Naive thymus-derived CD4-positive, alpha-beta T cell (primary cell): ENCODE measurements at regions of chr12 and their contacts with region 1.

Region 1: GRCh38 chr12:79373896-79374499 is 316.8 kb downstream of the PAWR start:
- DNase-seq: no peak
- ATAC-seq: no peak
- H3K4me3 ChIP-seq: no peak overlapping the region
- H3K4me3 Mint-ChIP-seq: no peak overlapping the region
- H3K27ac ChIP-seq: no peak overlapping the region
- H3K27ac Mint-ChIP-seq: no peak overlapping the region
- H3K4me1 ChIP-seq: no peaks in the 10 kb centered on the region
- H3K4me1 Mint-ChIP-seq: no peaks in the 10 kb centered on the region
- H3K27me3 ChIP-seq: no peaks in the 10 kb centered on the region
- H3K27me3 Mint-ChIP-seq: no peaks in the 10 kb centered on the region

Region 2: DNA sequence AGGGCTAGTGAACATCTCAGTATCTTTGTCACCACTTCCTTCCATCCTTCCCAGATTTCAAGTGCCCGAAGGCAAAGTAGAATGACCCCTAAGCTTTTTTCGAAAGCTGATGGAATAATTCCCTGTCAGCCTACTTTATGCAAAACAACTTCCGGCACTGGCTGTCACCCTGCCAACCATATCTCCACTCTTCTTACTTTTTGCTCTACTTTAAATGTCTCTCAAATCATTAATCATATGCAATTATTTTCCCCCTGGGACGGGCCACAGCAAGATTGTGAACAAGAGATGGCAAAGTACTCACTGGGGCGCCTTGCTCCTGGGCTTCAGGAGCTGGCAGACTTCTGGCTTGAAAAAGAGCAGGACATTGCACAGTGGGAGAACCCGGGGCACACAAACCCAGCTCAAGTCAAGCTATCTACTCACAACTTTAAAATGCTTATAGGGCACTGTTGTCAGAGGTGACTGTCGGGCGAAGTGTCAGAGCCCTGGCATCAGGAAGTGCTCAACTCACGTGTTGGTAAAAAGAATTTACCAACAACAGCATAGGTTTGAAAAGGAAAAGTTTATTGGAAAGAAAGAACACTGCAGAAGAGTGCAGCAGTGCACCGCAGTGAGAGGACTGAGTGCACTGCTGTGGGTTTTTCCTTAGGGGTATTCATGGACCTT is 56.7 kb before region 1 on chr12:
- CTCF ChIA-PET with region 1: no interaction called
- POLR2A ChIA-PET with region 1: no interaction called
- intact Hi-C with region 1: loop called in 1 of 2 experiments (anchors 10 kb)
- DNase-seq: no peak
- ATAC-seq: no peak
- H3K4me3 ChIP-seq: no peak overlapping the region
- H3K4me3 Mint-ChIP-seq: no peak overlapping the region
- H3K27ac ChIP-seq: no peak overlapping the region
- H3K27ac Mint-ChIP-seq: no peak overlapping the region
- H3K4me1 ChIP-seq: no peaks in the 10 kb centered on the region
- H3K4me1 Mint-ChIP-seq: no peaks in the 10 kb centered on the region
- H3K27me3 ChIP-seq: no peaks in the 10 kb centered on the region
- H3K27me3 Mint-ChIP-seq: no peaks in the 10 kb centered on the region

Region 3: GRCh38 chr12:79388011-79388410 is 14.0 kb after region 1 on chr12:
- CTCF ChIA-PET with region 1: no interaction called
- POLR2A ChIA-PET with region 1: no interaction called
- intact Hi-C with region 1: no loop called
- DNase-seq: no peak
- ATAC-seq: no peak
- H3K4me3 ChIP-seq: no peak overlapping the region
- H3K4me3 Mint-ChIP-seq: no peak overlapping the region
- H3K27ac ChIP-seq: no peak overlapping the region
- H3K27ac Mint-ChIP-seq: no peak overlapping the region
- H3K4me1 ChIP-seq: no peaks in the 10 kb centered on the region
- H3K4me1 Mint-ChIP-seq: no peaks in the 10 kb centered on the region
- H3K27me3 ChIP-seq: no peaks in the 10 kb centered on the region
- H3K27me3 Mint-ChIP-seq: peaks cover 0 to 4% (median 0%) of the 10 kb centered on the region in 5 donors